ENCODE measurements at regions of chr3 and their contacts with region 1.

Region 1: DNA sequence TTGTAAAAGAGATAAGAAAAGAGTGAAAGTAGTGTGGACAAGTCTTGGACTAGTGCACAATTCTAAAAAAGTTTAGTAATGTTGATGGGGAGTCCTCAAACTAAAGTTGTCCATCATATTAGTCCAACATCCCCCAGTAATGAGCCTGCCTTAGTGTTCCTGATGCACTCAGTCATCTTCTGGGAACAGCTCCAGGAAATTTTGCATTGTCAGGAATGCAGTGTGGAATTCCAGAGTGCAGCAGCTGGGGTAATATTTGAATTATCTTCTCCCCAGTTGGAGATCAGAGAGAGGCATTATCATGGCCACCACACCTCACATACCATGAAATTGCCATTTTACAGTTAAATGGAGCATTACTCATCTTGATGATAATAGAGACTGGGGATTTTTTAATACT is 528.8 kb upstream of the NAALADL2 start:
- DNase-seq: peak; percentile 48
- H3K4me3 ChIP-seq: no peak overlapping the region
- H3K27me3 ChIP-seq: no peaks in the 10 kb centered on the region
- CTCF ChIP-seq: no peak

Region 2: DNA sequence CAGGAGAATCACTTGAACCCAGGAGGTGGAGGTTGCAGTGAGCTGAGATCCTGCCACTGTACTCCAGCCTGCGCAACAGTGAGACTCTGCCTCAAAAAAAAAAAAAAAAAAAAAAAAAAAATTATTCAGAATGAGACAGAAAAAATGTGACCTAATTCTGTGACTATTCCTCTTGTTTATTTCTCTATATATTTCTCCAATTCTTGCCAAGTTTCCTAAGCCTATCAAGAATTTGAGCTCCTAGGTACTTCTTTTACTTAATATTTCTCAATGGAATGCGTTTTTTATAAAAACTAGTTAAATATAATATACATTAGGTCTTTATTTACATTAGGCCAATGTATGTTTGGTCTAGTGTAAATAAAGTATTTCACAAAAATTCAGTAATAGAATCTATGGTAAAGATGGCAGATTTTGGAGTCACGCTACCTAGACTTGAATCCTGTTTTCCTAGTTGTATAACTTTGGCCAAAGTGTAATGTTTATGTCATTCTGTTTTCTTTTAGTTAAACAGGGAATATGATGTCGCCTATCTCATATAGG is 615.7 kb after region 1 on chr3:
- CTCF ChIA-PET with region 1: no interaction called
- POLR2A ChIA-PET with region 1: interaction called, 12 read pairs
- DNase-seq: no peak
- H3K4me3 ChIP-seq: no peak overlapping the region
- H3K27me3 ChIP-seq: no peaks in the 10 kb centered on the region
- CTCF ChIP-seq: no peak